ENCODE measurements at regions of chr10 and their contacts with region 1.

Region 1: DNA sequence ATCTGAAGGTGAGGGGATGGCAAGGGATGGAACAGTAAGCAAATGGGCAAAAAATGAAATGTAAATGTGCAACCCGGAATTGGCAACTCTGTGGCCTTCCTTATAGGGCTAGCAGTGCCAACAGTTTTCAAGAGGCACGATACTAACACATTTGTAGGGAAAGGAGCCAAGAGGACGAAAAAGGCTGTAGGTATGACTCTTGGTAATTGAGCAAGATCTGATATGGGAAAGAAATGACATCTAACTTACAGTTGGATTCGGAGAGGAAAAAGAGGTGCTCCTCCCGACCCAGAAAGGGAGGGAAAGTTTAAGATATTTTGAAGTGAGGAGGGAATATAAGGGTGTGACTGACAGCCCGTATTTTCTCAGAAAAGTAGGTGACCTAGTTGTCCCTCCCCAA is 2.1 kb upstream of the CREM start:
- DNase-seq: no peak
- ATAC-seq: no peak
- H3K4me3 ChIP-seq: no peak overlapping the region
- H3K27ac ChIP-seq: no peak overlapping the region
- H3K4me1 ChIP-seq: peaks cover 12% of the 10 kb centered on the region
- H3K27me3 ChIP-seq: no peaks in the 10 kb centered on the region
- CTCF ChIP-seq: no peak

Region 2: GRCh38 chr10:35218339-35218955 is 93.9 kb after region 1 on chr10:
- intact Hi-C with region 1: loop called (anchors 5 kb)
- DNase-seq: peak; percentile 76
- ATAC-seq: peak; percentile 91
- H3K4me3 ChIP-seq: no peak overlapping the region
- H3K27ac ChIP-seq: peak overlapping the region; percentile 44
- H3K4me1 ChIP-seq: peaks cover 22% of the 10 kb centered on the region
- H3K27me3 ChIP-seq: no peaks in the 10 kb centered on the region
- CTCF ChIP-seq: peak; percentile 81

Region 3: DNA sequence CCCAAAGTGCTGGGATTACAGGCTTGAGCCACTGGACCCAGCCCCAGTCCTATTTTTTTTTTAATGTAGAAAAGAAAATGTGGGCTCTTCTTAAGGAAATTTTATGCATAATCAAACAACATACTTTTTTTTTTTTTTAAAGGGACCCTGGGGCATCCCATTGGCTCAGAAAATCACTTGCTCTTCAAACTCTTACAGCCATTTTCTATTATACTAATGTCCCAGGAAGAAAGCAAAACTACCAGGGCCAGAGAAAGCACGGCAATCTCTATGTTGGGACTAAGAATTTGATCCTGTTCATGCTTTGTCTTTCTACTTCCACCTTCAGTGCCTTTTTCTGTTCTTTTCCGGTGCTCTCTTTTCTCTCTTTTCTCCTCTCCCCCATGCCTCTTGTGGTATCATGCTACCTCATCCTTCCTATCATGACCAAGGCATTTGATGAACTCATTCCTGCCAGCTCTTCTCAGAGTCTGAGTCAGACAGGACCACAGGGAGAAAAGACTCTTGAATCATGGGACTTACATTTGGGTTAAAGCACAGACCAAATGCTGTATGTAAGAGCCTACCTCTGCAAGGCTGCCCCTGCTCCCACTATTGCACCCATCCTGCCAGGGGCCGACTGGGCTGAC is 135.3 kb after region 1 on chr10:
- intact Hi-C with region 1: no loop called
- DNase-seq: no peak
- ATAC-seq: no peak
- H3K4me3 ChIP-seq: no peak overlapping the region
- H3K27ac ChIP-seq: no peak overlapping the region
- H3K4me1 ChIP-seq: no peaks in the 10 kb centered on the region
- H3K27me3 ChIP-seq: no peaks in the 10 kb centered on the region
- CTCF ChIP-seq: no peak

Measured in upper lobe of right lung (tissue), 1 donor.